ENCODE measurements at regions of chr1 and their contacts with region 1.

Region 1: DNA sequence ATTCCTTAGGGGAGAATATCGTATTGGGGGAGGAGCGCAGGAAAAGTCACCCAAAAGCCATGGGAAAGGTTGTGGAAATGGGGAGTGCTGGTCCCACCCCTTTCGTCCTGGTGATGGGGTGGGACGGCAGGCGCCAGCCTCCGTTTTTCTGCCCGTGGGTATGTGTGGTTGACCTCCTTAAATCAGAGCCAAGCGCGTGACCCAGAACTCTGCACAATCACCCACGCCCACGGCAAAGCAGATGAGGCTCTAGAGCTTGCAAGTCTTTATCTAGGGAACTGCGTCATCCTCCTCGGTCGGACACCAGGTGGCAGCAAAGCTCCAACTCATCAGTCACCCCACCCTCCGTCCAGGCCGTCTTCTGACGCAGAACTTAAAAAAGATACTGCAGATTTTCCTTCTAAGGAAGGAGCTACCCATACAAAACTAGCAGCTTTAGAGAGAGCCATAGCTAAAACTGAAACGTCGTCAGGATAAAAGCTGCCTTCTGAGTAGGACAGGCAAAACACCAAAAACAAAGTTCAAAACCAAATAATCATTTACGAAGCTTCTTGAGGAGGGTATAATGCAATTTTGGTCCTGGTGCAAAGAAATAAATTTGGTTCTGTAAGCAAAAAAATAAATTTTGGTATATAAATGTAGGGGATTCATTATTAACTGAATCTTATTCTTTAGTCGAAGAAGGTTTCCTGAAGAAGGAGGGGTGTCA is 62.0 kb downstream of the TBX19 start:
- DNase-seq: peak; percentile 77 to 86
- H3K4me3 ChIP-seq: peak overlapping the region; percentile 17 to 55 (median 48); a peak in 6 of 8 replicates
- H3K27ac ChIP-seq: no peak overlapping the region
- H3K4me1 ChIP-seq: no peaks in the 10 kb centered on the region
- H3K27me3 ChIP-seq: no peaks in the 10 kb centered on the region
- CTCF ChIP-seq: peak; percentile 85 to 89 (median 86)
- EP300 ChIP-seq: no peak
- POLR2A ChIP-seq: no peak
- RAD21 ChIP-seq: peak; percentile 93 to 96

Region 2: DNA sequence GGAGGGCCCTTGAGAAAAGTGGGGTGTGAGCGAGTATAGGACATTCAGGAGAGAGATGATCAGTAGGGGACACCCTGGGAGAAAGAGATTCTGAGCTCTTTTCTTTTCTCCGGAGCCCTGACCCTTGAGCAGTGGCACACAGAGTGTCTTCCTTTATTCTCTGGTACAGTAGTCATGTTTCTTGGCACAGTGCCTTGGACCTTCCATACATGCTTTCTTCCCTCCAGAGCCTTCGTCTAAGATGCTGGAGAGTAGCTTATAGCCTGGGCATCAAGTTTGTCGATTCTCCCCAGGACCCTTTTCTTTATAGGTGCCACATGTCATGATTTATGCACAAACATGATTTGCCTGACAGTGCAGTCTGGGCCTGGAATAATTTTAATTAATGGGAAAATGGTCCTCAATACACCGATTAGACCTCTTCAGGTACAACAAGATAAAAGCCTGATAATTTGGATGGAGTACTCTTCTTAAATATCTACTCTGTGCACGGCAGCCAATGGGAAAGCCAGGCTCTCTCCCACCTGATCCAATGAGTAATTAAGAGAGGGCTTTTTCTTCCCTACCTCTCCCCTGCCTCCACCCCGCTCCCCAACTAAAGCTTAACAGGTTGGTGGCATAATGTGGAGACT is 62.3 kb before region 1 on chr1 and contains the start of gene TBX19:
- CTCF ChIA-PET with region 1: interaction called, 13 read pairs
- POLR2A ChIA-PET with region 1: no interaction called
- DNase-seq: no peak
- H3K4me3 ChIP-seq: no peak within 1 kb of the TSS
- H3K27ac ChIP-seq: no peak within 1 kb of the TSS
- H3K4me1 ChIP-seq: peaks cover 0 to 6% (median 0%) of the 10 kb centered on the region in 4 experiments; a peak in 2 of 7 replicates
- H3K27me3 ChIP-seq: no peaks in the 10 kb centered on the region
- CTCF ChIP-seq: no peak
- EP300 ChIP-seq: no peak
- POLR2A ChIP-seq: no peak
- RAD21 ChIP-seq: no peak
- total RNA-seq, gene TBX19: 0.80 and 1.0 TPM in 2 replicates

Region 3: GRCh38 chr1:168328731-168329399 is 13.9 kb before region 1 on chr1:
- CTCF ChIA-PET with region 1: interaction called, 29 read pairs
- POLR2A ChIA-PET with region 1: interaction called, 3 read pairs
- DNase-seq: no peak
- H3K4me3 ChIP-seq: no peak overlapping the region
- H3K27ac ChIP-seq: no peak overlapping the region
- H3K4me1 ChIP-seq: no peaks in the 10 kb centered on the region; a peak in 3 of 7 replicates
- H3K27me3 ChIP-seq: no peaks in the 10 kb centered on the region
- CTCF ChIP-seq: no peak
- EP300 ChIP-seq: no peak
- POLR2A ChIP-seq: no peak
- RAD21 ChIP-seq: no peak

Region 4: DNA sequence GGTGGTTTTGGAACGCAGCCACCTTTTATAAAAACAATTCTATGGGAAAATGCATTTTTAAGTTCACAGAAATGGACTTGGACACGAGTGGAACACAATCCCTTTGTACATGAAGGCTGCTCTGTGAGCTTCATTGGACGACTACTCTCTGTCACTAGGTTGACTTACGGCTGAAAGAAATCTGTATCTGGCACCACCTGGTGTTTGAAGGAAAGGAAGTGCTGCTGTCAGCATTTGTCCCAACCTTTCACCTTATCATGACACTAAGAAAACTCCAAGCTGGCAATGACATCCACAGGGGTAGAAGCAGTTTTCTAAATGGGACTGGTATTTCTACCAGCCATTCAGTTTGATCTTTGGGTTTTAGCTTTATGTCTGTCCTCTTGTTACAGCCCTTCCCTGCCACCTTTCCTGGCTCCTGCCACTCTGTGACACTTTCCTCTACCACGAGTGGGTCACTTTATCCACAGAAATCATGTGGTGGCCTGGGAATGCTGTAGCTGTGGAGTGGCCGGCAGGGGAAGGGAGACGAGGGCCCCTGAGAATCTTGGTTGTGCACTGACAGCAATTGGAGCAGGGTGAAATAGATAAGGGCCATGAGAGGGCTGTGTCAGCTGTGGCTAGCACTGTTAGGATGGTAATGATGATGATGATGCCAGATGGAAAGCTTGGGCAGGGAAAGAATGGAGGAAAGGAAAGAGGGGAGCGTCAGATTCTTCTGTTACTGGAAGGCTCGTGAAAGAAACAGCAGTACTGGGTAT is 23.2 kb after region 1 on chr1:
- CTCF ChIA-PET with region 1: interaction called, 42 read pairs
- POLR2A ChIA-PET with region 1: no interaction called
- DNase-seq: no peak
- H3K4me3 ChIP-seq: no peak overlapping the region
- H3K27ac ChIP-seq: no peak overlapping the region
- H3K4me1 ChIP-seq: no peaks in the 10 kb centered on the region
- H3K27me3 ChIP-seq: no peaks in the 10 kb centered on the region
- CTCF ChIP-seq: peak in 2 of 3 experiments; percentile 43; a peak in 3 of 4 replicates
- EP300 ChIP-seq: no peak
- POLR2A ChIP-seq: no peak
- RAD21 ChIP-seq: peak; percentile 35 to 58; a peak in 3 of 4 replicates

Region 5: GRCh38 chr1:168381850-168382249 is 39.1 kb after region 1 on chr1:
- CTCF ChIA-PET with region 1: interaction called, 15 read pairs
- POLR2A ChIA-PET with region 1: no interaction called
- DNase-seq: no peak
- H3K4me3 ChIP-seq: no peak overlapping the region
- H3K27ac ChIP-seq: no peak overlapping the region
- H3K4me1 ChIP-seq: peaks cover 0 to 2% (median 0%) of the 10 kb centered on the region in 4 experiments; a peak in 1 of 7 replicates
- H3K27me3 ChIP-seq: peaks cover 0 to 4% (median 2%) of the 10 kb centered on the region in 4 experiments; a peak in 3 of 7 replicates
- CTCF ChIP-seq: no peak
- EP300 ChIP-seq: no peak
- POLR2A ChIP-seq: no peak
- RAD21 ChIP-seq: no peak

Region 6: GRCh38 chr1:168428063-168428731 is 85.5 kb after region 1 on chr1:
- CTCF ChIA-PET with region 1: interaction called, 15 read pairs
- POLR2A ChIA-PET with region 1: no interaction called
- DNase-seq: no peak
- H3K4me3 ChIP-seq: no peak overlapping the region
- H3K27ac ChIP-seq: no peak overlapping the region
- H3K4me1 ChIP-seq: peaks cover 0 to 6% (median 3%) of the 10 kb centered on the region in 4 experiments; a peak in 4 of 7 replicates
- H3K27me3 ChIP-seq: no peaks in the 10 kb centered on the region; a peak in 1 of 7 replicates
- CTCF ChIP-seq: no peak
- EP300 ChIP-seq: no peak
- POLR2A ChIP-seq: no peak
- RAD21 ChIP-seq: no peak

Region 7: GRCh38 chr1:168603501-168604110 is 260.9 kb after region 1 on chr1:
- CTCF ChIA-PET with region 1: interaction called, 14 read pairs
- POLR2A ChIA-PET with region 1: no interaction called
- DNase-seq: peak; percentile 50 to 82
- H3K4me3 ChIP-seq: no peak overlapping the region
- H3K27ac ChIP-seq: no peak overlapping the region
- H3K4me1 ChIP-seq: no peaks in the 10 kb centered on the region
- H3K27me3 ChIP-seq: peaks cover 0 to 1% (median 0%) of the 10 kb centered on the region in 4 experiments; a peak in 1 of 7 replicates
- CTCF ChIP-seq: peak; percentile 82 to 90 (median 88)
- EP300 ChIP-seq: no peak
- POLR2A ChIP-seq: no peak
- RAD21 ChIP-seq: peak; percentile 99

Measured in H1 (cell line).